Lower leg skin (tissue), 4 donors: ENCODE measurements at regions of chr5 and their contacts with region 1.

Region 1: GRCh38 chr5:37075399-37075950 is 173.7 kb downstream of the CPLANE1 start:
- DNase-seq: no peak
- H3K4me3 ChIP-seq: no peak overlapping the region
- CTCF ChIP-seq: no peak
- POLR2A ChIP-seq: no peak

Region 2: GRCh38 chr5:36763454-36763853 is 312.0 kb before region 1 on chr5:
- intact Hi-C with region 1: no loop called
- DNase-seq: no peak
- H3K4me3 ChIP-seq: no peak overlapping the region
- CTCF ChIP-seq: no peak
- POLR2A ChIP-seq: no peak

Region 3: GRCh38 chr5:37120270-37120669 is 44.8 kb after region 1 on chr5:
- intact Hi-C with region 1: loop called (anchors 1 kb)
- DNase-seq: no peak
- H3K4me3 ChIP-seq: no peak overlapping the region
- CTCF ChIP-seq: no peak
- POLR2A ChIP-seq: no peak